Sciatic nerve (tissue), 2 donors: ENCODE measurements at regions of chr5 and their contacts with region 1.

Region 1: DNA sequence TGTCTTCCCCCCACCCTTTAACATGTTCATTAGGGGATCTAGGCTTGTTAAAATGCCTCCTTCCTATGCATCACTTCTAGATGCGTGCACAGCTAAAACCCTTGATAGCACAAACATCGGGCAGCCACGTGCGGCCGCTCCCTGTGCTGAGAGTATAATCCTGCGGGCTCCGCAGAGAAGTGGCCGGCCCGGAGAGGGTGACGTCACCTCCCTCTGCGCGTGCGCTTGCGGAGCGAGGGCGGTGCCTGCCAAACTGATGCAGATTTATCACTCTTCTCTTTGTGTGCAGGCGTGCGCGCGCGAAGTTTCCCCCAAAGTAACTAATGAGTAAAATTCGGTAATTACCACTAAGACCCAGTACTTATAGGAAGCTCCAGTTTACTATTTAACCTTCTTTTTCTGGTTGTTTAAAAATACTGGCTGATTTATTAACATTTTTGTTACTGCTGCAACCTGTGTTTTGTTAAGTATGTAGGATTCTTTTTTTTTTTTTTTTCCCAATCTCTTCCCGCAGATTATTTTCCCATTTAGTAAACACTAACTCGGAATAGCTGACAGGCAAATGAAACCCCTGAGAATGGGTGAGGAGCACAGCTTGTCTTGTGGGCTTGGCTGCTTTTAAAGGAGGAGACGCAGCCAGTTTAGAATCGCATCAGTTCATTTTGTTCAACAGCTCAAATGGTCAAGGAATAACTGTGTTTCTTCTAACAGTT is 121.6 kb downstream of the TRIO start:
- DNase-seq: peak; percentile 94
- ATAC-seq: peak; percentile 98

Region 2: GRCh38 chr5:14118527-14119320 is 146.0 kb before region 1 on chr5:
- intact Hi-C with region 1: loop called (anchors 10 kb)
- DNase-seq: no peak
- ATAC-seq: peak; percentile 78

Region 3: DNA sequence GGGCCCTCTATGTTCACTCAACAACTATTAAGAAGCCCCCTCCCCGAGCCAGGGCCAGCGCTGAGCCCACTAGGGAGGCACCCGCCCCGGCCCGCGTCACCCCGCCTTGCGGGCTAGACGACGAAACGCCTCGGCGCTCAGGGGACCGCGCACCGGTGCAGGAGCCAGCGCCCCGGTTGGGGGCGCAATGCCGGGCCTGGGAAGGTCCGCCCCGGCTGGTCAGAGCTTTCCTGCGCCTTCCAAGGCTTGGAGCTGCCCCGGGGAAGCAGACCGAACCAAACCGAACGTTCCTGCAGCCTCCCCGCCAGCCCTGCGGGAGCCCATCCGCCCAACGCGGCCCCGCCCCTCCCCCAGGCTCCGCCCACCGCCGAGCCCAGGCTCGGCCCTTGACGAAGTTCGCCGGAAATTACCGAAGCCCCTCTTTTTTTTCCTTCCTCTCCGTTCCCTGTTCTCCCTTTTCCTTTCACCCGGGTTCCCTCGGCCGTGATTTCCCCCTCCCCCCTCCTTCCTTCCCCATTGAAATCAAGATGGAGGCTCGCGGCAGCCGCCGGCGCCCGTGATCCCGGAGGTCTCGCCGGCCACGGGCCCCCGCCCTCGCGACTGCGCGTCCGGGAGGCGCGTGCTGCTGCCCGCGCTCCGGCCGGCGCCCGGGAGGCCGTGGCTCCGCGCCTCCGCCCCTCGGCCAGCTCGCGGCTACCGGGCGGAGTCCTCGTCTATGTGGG is 121.8 kb before region 1 on chr5 and contains the start of gene TRIO:
- intact Hi-C with region 1: loop called (anchors 5 kb)
- DNase-seq: peak; percentile 97
- ATAC-seq: peak; percentile 96
- total RNA-seq, gene TRIO: 192 TPM

Region 4: DNA sequence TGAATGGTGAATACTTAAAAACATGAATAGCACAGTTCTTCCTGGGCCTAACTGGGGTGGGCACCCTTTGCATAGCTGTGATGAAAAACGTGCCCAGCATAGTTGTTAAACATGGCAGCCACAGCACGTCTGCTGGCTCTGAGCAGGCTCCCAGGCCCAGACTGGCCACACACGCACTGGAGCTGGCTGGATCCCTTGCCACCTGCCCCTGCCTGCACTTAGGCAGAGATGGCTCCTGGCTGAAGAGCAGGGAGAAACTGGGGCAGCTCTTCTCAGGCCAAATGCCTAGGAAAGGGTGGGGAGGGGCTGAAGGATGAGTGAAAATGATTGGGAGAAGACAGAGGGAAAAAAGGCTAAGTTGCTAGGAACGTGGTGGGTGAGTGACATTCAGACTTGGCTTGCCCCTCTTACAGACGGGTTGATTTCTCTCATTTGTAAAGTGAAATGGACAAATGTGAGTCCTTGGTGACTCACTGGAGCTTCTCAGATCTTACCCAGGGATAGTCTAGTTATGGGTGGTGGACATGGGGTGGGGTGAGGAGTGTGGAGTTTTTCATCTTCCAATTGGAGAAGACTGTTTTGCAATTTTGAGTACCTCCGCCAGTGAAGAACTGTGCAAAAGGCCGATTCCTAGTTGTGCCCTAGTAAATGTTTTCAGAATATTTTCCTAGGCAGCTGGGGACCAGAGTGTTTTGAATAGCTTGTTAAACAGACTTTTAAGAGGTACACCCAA is 79.3 kb before region 1 on chr5:
- intact Hi-C with region 1: loop called (anchors 10 kb)
- DNase-seq: no peak
- ATAC-seq: peak; percentile 44

Region 5: DNA sequence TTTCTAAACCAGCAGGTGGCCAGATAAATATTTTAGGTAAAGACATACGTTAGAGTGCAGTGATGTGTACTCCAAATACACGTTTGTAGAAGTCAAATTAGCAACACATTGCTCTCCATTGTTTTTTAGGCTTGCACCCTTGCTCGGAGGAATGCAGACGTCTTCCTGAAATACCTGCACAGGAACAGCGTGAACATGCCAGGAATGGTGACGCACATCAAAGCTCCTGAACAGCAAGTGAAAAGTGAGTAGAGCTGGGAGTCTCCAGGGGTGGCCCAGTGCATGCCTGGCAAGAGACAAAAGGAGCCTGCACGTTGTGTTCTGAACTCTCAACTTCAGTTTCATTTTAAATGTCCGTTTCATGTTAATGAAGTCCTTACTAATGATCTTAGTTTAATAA is 109.3 kb after region 1 on chr5:
- intact Hi-C with region 1: no loop called
- DNase-seq: no peak
- ATAC-seq: no peak

Region 6: DNA sequence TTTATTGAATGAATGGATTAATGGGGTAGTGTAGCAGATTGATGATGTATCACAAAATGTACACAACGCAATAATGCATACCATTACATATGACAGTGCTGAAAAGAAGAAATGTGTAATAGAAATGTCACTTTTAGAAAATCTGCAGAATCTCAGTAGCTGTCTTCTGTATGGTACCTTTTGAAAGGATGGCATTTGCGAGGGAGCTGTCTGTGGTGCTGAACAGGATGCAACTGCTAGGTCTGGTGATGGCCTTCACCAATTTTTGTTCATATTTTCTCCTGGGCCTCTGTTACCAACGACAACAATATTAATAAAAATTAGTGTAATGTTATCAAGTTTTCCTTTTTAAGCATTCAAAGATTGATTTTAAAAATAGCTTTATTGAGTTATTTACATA is 363.6 kb after region 1 on chr5:
- intact Hi-C with region 1: no loop called
- DNase-seq: peak; percentile 65
- ATAC-seq: no peak

Region 7: DNA sequence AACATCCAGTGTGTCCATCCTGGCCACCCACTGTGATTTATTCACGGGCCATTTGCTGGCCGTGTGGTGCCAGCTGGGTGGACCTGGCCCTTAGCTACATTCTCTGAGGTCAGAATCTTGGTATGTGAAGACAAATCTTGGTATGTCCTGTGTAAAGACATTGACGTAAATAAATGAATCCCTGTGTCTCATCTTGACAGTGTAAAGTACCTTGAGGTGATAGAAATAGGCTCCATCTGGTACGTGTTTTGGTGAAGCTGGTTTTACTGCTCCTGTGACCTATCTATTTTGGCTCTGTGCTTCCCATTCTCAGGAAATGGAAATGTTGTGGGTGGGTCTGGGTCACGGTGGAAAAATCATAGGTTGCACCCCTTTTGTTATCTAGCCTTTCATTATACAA is 852.2 kb after region 1 on chr5:
- intact Hi-C with region 1: no loop called
- DNase-seq: no peak
- ATAC-seq: no peak